Activated CD4-positive, alpha-beta memory T cell treated with anti-CD3 and anti-CD28 coated beads, Interleukin-2, amount 10 ng/mL, durations not matched to agents 7 days and 5 days (primary cell): ENCODE measurements at regions of chr1 and their contacts with region 1.

Region 1: DNA sequence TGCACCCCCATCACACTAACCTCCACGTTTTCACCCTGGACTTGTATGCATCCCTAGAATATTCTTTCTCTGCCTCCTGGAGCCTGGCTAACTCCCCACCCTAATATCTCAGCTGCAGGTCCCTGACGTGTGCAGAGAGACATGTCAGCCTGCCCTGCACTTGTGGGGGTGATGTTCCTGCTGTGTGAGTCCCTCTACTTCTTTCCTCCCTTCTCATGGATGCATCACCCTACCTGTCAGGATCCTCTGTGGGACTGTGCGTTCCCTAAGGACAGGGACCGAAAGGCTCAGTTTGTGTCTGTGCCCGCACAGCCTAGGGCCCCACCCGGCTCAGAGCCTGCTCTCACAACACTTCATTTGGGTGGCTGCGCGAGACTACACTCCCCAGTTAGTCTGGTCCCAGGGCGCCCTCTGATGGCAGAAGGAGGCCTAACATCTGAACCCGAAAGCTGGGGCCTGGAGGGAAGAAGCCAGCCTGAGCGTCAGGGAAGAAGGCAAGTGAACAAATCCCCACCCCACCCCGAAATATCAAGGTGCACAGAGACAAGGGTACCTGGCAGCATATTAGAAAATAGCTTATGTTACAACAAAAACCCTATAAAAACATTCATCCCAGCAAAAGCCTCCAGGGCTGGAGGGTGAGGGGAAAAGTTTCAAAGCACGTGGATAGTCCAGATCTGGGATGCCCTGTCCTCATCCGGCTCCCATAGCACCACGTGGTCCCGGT is 3.7 kb downstream of the CD52 start:
- DNase-seq: peak; percentile 95
- H3K4me3 Mint-ChIP-seq: peak overlapping the region; percentile 84
- H3K27ac Mint-ChIP-seq: peak overlapping the region; percentile 97
- H3K4me1 Mint-ChIP-seq: peaks cover 51% of the 10 kb centered on the region
- H3K27me3 Mint-ChIP-seq: no peaks in the 10 kb centered on the region

Region 2: DNA sequence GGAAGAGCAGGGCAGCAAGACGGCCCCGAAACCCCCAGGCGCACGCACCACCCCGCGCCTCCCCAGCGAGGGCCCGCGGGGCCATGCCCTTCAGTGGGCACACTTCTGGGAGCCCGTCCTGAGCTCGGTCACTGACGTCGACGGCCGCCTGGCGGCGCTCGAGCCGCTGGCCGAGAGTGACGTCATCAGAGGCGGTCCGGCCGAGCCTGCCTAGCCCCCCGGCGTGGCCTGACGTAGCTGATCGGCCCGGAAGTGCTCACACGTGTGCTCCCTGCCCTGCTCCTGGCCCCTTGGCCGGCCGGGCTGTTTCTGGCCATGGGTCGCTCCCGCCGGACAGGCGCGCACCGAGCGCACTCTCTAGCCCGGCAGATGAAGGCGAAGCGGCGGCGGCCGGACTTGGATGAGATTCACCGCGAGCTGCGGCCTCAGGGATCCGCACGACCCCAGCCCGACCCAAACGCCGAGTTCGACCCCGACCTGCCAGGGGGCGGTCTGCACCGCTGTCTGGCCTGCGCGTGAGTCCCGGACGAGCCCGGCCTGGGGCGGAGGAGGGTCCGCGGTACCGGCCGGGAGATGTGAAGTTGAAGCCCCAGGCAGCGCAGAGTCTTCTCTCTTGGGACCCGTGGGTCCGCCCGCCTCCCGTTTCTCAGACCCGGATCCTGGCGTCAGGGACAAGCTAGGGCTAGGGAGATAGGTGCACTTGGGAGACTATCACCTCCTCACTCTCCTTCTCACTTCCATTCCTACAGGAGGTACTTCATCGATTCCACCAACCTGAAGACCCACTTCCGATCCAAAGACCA is 151.6 kb before region 1 on chr1 and contains the start of gene ZNF593:
- CTCF ChIA-PET with region 1: interaction called, 12 read pairs
- POLR2A ChIA-PET with region 1: interaction called, 3 read pairs
- DNase-seq: peak; percentile 90
- H3K4me3 Mint-ChIP-seq: peak within 1 kb of the TSS; percentile 83
- H3K27ac Mint-ChIP-seq: peak within 1 kb of the TSS; percentile 70
- H3K4me1 Mint-ChIP-seq: peaks cover 32% of the 10 kb centered on the region
- H3K27me3 Mint-ChIP-seq: no peaks in the 10 kb centered on the region
- total RNA-seq, gene ZNF593: 20.3 to 22.9 TPM

Region 3: DNA sequence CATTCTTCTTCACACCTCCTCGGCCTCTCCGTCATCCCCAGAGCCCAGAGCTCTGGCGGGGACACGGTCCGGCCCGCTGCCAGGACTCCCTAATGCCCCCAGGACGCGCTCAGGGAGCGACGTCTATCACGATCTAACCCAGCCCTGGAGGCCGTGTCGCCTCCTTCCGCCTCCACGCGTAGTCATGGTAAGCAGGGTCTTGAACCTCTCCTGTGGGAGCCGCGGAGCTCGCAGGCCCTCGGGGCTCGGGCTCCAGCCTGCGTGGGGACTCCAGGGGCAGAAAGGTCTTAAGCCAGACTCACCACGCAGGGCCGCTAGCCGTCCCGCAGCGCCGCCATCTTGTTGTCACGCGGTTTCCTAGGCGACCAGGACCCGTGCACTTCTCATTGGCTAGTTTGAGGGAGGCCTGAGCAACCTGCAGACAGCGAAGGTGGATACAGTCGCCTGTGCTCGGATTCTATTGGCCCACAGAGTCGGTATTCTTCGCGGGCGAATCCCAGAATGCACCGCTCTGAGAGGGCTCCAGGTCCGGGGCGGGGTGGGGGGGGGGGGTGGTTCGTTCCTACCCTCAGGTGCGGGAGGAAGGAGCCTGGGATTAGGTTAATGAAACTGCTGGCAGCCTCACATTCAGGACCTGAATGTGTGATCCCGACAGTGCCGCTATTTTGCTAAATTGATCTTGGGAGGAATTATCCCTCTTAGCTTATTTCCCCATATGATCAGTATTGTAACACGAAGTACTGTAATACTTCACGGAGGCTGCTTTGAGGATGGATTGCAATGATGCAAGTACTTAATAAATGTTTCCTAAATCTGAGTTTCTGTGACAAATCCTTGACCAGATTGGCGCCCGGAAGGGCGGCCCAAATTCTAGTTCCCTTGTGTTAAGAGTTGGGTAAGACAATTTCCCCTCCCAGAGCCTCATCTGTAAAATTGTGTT is 14.9 kb before region 1 on chr1 and contains the start of gene UBXN11:
- CTCF ChIA-PET with region 1: interaction called, 59 read pairs
- POLR2A ChIA-PET with region 1: interaction called, 216 read pairs
- DNase-seq: peak; percentile 96
- H3K4me3 Mint-ChIP-seq: peak within 1 kb of the TSS; percentile 90
- H3K27ac Mint-ChIP-seq: peak within 1 kb of the TSS; percentile 98
- H3K4me1 Mint-ChIP-seq: peaks cover 43% of the 10 kb centered on the region
- H3K27me3 Mint-ChIP-seq: no peaks in the 10 kb centered on the region
- total RNA-seq, gene UBXN11: 46.9 to 49.9 TPM

Region 4: GRCh38 chr1:26358411-26359384 is 37.2 kb after region 1 on chr1:
- CTCF ChIA-PET with region 1: interaction called, 36 read pairs
- POLR2A ChIA-PET with region 1: interaction called, 9 read pairs
- DNase-seq: peak; percentile 87
- H3K4me3 Mint-ChIP-seq: peak overlapping the region; percentile 14
- H3K27ac Mint-ChIP-seq: peak overlapping the region; percentile 48
- H3K4me1 Mint-ChIP-seq: peaks cover 60% of the 10 kb centered on the region
- H3K27me3 Mint-ChIP-seq: peaks cover 17% of the 10 kb centered on the region

Region 5: GRCh38 chr1:26363549-26364448 is 42.3 kb after region 1 on chr1:
- CTCF ChIA-PET with region 1: interaction called, 36 read pairs
- POLR2A ChIA-PET with region 1: interaction called, 9 read pairs
- DNase-seq: peak; percentile 88
- H3K4me3 Mint-ChIP-seq: no peak overlapping the region
- H3K27ac Mint-ChIP-seq: no peak overlapping the region
- H3K4me1 Mint-ChIP-seq: peaks cover 49% of the 10 kb centered on the region
- H3K27me3 Mint-ChIP-seq: peaks cover 23% of the 10 kb centered on the region

Region 6: GRCh38 chr1:26378088-26378878 is 56.8 kb after region 1 on chr1:
- CTCF ChIA-PET with region 1: interaction called, 5 read pairs
- POLR2A ChIA-PET with region 1: interaction called, 18 read pairs
- DNase-seq: peak; percentile 89
- H3K4me3 Mint-ChIP-seq: peak overlapping the region; percentile 52
- H3K27ac Mint-ChIP-seq: peak overlapping the region; percentile 91
- H3K4me1 Mint-ChIP-seq: peaks cover 75% of the 10 kb centered on the region
- H3K27me3 Mint-ChIP-seq: no peaks in the 10 kb centered on the region

Region 7: DNA sequence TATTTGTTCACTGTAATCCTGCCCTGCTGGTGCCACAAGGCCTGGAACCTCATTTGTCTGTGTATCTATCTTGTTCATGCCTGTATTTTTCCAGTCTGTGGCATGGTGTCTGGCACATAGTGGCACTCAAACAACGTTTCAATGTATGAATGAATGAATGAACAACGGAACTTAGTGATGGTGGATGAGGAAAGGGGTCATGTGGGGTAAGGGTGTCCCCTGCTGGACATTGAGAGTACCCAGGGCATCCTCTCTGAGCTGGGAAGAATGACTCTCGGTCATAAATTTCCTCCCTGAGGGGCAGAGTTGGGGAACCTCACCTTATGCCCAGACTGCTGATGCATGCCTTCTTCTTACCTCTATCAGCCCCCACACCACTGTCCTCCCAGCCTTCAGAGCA is 70.0 kb after region 1 on chr1:
- CTCF ChIA-PET with region 1: interaction called, 10 read pairs
- POLR2A ChIA-PET with region 1: interaction called, 5 read pairs
- DNase-seq: peak; percentile 74
- H3K4me3 Mint-ChIP-seq: no peak overlapping the region
- H3K27ac Mint-ChIP-seq: no peak overlapping the region
- H3K4me1 Mint-ChIP-seq: peaks cover 43% of the 10 kb centered on the region
- H3K27me3 Mint-ChIP-seq: peaks cover 7% of the 10 kb centered on the region